Ovary (tissue), 10 donors: ENCODE measurements at regions of chr10 and their contacts with region 1.

Region 1: DNA sequence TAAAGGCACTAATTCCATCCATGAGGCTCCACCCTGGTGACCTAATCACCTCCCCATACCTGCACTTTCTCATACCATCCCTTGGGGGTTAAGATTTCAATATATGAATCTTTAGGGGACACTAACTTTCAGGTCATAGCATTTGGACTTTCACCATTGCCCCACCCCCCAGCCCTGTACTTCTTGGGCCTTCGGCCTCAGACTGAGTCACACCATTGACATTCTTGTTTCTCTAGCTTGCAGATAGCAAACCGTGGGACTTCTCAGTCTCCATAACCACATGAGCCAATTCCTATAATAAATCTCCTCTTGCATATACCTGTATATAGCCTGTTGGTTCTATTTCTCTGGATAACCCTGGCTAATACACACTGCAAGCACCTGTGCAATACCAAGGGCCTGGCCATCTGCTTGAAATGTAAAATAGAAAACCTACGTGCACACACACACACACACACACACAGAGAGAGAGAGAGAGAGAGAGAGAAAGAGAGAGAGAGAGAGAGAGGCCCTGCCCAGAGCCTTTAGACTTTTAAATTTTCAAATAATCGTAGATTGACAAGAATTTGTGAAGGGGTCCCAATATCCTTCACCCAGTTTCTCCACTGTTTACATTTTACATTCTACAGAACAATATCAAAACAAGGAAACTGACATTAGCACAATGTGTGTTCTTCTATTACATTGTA is 25.3 kb downstream of the ANXA8 start:
- DNase-seq: no peak
- H3K4me3 ChIP-seq: no peak overlapping the region
- H3K27ac ChIP-seq: no peak overlapping the region
- H3K4me1 ChIP-seq: peaks cover 6% of the 10 kb centered on the region
- H3K27me3 ChIP-seq: no peaks in the 10 kb centered on the region
- CTCF ChIP-seq: no peak
- EP300 ChIP-seq: no peak
- POLR2A ChIP-seq: no peak

Region 2: DNA sequence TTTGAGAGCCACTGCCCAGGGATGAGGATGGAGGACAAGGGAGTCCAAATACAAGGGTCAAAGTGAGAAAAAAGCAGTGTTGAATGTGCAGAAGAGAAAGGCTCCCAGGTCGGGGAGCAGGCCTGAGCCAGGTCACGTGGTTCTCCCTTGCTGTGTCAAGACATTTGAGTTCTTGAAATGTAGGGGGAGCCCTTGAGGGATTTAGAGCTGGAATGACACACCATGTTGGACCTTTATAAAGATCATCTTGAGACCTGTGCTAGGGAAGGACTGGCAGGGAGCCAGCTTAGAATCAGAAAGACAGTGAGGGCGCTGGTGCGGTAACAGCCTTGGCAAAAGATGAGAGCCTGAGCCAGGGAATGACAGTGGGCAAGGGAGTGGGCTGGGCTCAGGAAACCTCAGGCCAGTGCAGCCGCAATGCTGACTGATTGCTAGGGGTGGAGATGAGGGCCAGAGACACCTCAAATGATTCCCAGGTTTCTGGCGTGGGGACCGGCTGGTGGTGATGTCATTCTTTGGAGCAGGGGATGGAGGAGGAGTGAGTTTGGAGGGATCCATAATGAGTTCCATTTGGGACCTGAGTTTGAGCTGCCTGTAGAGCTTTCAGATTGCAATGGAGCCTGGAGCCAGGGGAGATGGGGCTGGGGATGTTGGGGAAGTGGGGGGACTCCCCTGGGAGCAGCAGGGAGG is 427.3 kb before region 1 on chr10:
- intact Hi-C with region 1: no loop called
- DNase-seq: peak in 3 of 5 donors; percentile 3 to 12 (median 5)
- H3K4me3 ChIP-seq: no peak overlapping the region
- H3K27ac ChIP-seq: no peak overlapping the region
- H3K4me1 ChIP-seq: no peaks in the 10 kb centered on the region
- H3K27me3 ChIP-seq: no peaks in the 10 kb centered on the region
- CTCF ChIP-seq: no peak
- EP300 ChIP-seq: no peak
- POLR2A ChIP-seq: no peak

Region 3: GRCh38 chr10:47374611-47375536 is 83.7 kb before region 1 on chr10:
- intact Hi-C with region 1: no loop called
- DNase-seq: peak in 1 of 5 donors; percentile 8
- H3K4me3 ChIP-seq: no peak overlapping the region
- H3K27ac ChIP-seq: no peak overlapping the region
- H3K4me1 ChIP-seq: no peaks in the 10 kb centered on the region
- H3K27me3 ChIP-seq: no peaks in the 10 kb centered on the region
- CTCF ChIP-seq: no peak
- EP300 ChIP-seq: no peak
- POLR2A ChIP-seq: no peak

Region 4: GRCh38 chr10:47402641-47403301 is 55.8 kb before region 1 on chr10:
- intact Hi-C with region 1: no loop called
- DNase-seq: peak; percentile 52 to 64 (median 61)
- H3K4me3 ChIP-seq: no peak overlapping the region
- H3K27ac ChIP-seq: no peak overlapping the region
- H3K4me1 ChIP-seq: peaks cover 5% of the 10 kb centered on the region
- H3K27me3 ChIP-seq: no peaks in the 10 kb centered on the region
- CTCF ChIP-seq: no peak
- EP300 ChIP-seq: no peak
- POLR2A ChIP-seq: no peak

Region 5: DNA sequence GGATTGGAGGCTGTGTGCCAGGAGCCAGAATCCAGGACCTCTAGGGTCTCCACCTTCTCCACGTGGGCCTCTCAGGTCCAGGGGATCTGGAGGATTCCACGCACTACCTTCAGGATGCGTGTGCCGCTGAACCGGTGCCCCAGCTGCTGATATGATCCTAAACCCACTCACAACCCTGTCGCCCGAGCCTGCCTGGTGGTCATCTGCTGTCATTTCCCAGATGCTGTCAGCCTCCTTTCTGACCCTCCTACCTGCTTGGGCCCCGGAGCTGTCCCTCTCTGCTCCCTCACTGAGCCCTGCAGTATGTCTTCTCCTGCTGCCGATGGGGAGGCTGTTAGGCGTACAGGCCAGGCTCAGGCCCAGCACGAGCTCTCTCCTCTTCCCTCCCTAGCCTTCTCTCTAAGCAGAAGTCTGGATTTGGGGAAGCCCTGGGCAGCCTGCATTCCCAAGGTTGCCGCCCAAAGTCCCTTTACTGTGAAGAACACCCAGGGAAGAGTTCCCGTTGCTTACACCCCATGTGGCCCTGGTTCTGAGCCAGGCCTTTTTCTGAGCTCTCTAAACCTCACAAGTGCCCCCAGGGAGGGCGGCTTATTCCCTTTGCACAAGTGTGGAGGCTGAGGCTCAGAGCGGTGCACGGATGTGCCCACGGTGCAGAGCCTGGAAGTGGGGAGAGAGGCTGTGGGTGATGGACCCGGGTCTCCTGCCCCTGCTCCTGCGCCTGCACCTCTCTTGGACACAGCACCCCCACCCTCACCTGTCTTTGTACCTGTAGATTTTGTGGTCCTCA is 43.7 kb before region 1 on chr10:
- intact Hi-C with region 1: loop called in 1 of 4 experiments (anchors 5 kb)
- DNase-seq: peak in 1 of 5 donors; percentile 21
- H3K4me3 ChIP-seq: no peak overlapping the region
- H3K27ac ChIP-seq: no peak overlapping the region
- H3K4me1 ChIP-seq: no peaks in the 10 kb centered on the region
- H3K27me3 ChIP-seq: no peaks in the 10 kb centered on the region
- CTCF ChIP-seq: no peak
- EP300 ChIP-seq: no peak
- POLR2A ChIP-seq: no peak